ENCODE measurements at regions of chr6 and their contacts with region 1.

Region 1: GRCh38 chr6:103875221-103875620 is 984.5 kb downstream of the HACE1 start:
- DNase-seq: no peak
- ATAC-seq: no peak
- H3K4me3 ChIP-seq: no peak overlapping the region
- H3K27ac ChIP-seq: no peak overlapping the region
- H3K4me1 ChIP-seq: no peaks in the 10 kb centered on the region
- H3K27me3 ChIP-seq: no peaks in the 10 kb centered on the region

Region 2: DNA sequence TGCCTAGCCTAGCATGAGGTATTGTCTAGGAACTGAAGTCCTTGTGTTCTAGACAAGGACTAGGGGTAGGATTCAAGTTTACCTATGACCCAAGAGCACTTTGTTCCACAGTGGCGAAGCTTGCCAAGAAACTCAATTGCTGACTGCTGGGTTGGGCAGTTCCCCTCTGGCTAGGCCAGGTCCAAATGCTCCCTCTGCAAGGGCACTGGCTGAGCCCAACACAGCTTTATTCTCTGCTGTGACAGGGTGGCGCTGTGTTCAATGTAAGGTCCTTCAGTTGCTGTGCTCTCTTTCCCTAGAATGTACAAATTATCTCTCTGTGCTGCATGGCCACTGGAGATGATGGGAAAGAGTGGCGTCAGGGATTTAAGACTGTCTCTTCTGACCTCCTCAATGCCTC is 33.7 kb after region 1 on chr6:
- intact Hi-C with region 1: loop called in 1 of 2 experiments (anchors 1 kb)
- DNase-seq: no peak
- ATAC-seq: peak; percentile 44
- H3K4me3 ChIP-seq: no peak overlapping the region
- H3K27ac ChIP-seq: no peak overlapping the region
- H3K4me1 ChIP-seq: no peaks in the 10 kb centered on the region
- H3K27me3 ChIP-seq: no peaks in the 10 kb centered on the region

Region 3: DNA sequence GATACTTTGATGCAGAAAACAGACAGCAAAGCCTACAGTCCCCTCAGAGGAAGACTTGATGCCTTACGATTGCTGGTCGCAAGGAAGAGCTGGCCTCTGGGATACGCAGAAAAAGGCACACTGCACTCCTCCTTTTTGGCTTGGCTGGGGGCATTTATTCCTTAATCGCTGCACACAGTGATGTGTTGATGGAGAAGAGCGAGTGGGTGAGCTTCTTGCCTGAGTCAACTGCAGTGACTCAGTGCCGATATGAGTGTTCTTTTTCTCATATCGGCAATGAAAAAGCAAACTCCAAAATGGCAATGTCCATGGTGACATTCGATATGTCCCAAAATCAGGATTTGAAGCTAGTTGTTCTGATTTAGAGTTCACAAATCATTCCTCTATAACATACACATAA is 189.7 kb after region 1 on chr6:
- intact Hi-C with region 1: no loop called
- DNase-seq: no peak
- ATAC-seq: no peak
- H3K4me3 ChIP-seq: no peak overlapping the region
- H3K27ac ChIP-seq: no peak overlapping the region
- H3K4me1 ChIP-seq: no peaks in the 10 kb centered on the region
- H3K27me3 ChIP-seq: no peaks in the 10 kb centered on the region

Measured in aorta (tissue), 5 donors.